Activated CD8-positive, alpha-beta T cell treated with anti-CD3 and anti-CD28 coated beads, Interleukin-2, amount 10 ng/mL, durations not matched to agents 7 days and 5 days (primary cell): ENCODE measurements at regions of chr6 and their contacts with region 1.

Region 1: GRCh38 chr6:110528101-110528929 is 51.9 kb upstream of the SLC22A16 start:
- DNase-seq: peak; percentile 72
- ATAC-seq: peak; percentile 60
- H3K4me3 Mint-ChIP-seq: no peak overlapping the region
- H3K27ac Mint-ChIP-seq: no peak overlapping the region
- H3K4me1 Mint-ChIP-seq: peaks cover 5% of the 10 kb centered on the region
- H3K27me3 Mint-ChIP-seq: peaks cover 2% of the 10 kb centered on the region

Region 2: DNA sequence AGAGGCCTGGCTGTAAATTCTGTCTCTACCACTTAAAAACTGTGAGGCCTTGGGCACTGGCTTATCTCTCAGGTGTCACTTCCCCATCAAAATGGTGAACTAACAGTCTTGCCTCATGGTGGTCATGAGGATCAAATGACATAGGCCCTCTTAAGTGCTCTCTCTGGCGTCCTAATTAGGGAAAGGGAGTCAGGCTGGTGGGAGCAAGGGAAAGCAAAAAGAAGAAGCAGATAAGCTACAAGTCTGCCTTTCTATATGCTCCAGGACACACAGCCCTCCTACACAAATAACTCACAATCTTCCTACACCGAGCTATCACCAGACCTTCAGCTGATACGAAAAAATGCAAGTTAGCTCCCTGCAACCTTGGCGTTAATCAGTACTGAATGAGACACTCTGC is 32.4 kb before region 1 on chr6:
- CTCF ChIA-PET with region 1: no interaction called
- POLR2A ChIA-PET with region 1: no interaction called
- DNase-seq: no peak
- ATAC-seq: no peak
- H3K4me3 Mint-ChIP-seq: no peak overlapping the region
- H3K27ac Mint-ChIP-seq: no peak overlapping the region
- H3K4me1 Mint-ChIP-seq: no peaks in the 10 kb centered on the region
- H3K27me3 Mint-ChIP-seq: peaks cover 16% of the 10 kb centered on the region

Region 3: GRCh38 chr6:110738899-110739365 is 210.6 kb after region 1 on chr6:
- CTCF ChIA-PET with region 1: no interaction called
- POLR2A ChIA-PET with region 1: no interaction called
- DNase-seq: no peak
- ATAC-seq: no peak
- H3K4me3 Mint-ChIP-seq: no peak overlapping the region
- H3K27ac Mint-ChIP-seq: no peak overlapping the region
- H3K4me1 Mint-ChIP-seq: no peaks in the 10 kb centered on the region
- H3K27me3 Mint-ChIP-seq: no peaks in the 10 kb centered on the region

Region 4: GRCh38 chr6:110949679-110950285 is 421.5 kb after region 1 on chr6:
- CTCF ChIA-PET with region 1: interaction called, 21 read pairs
- POLR2A ChIA-PET with region 1: no interaction called
- DNase-seq: no peak
- ATAC-seq: no peak
- H3K4me3 Mint-ChIP-seq: no peak overlapping the region
- H3K27ac Mint-ChIP-seq: no peak overlapping the region
- H3K4me1 Mint-ChIP-seq: peaks cover 7% of the 10 kb centered on the region
- H3K27me3 Mint-ChIP-seq: peaks cover 8% of the 10 kb centered on the region